MCF 10A (cell line): ENCODE measurements at regions of chr7 and their contacts with region 1.

Region 1: GRCh38 chr7:2109936-2110585 is 122.7 kb downstream of the MAD1L1 start:
- DNase-seq: peak; percentile 94
- H3K4me3 Mint-ChIP-seq: no peak overlapping the region
- H3K27ac Mint-ChIP-seq: peak overlapping the region; percentile 69
- H3K4me1 Mint-ChIP-seq: peaks cover 27% of the 10 kb centered on the region
- H3K27me3 Mint-ChIP-seq: no peaks in the 10 kb centered on the region
- CTCF ChIP-seq: no peak

Region 2: GRCh38 chr7:2175514-2175913 is 65.5 kb after region 1 on chr7:
- CTCF ChIA-PET with region 1: no interaction called
- POLR2A ChIA-PET with region 1: no interaction called
- intact Hi-C with region 1: loop called (anchors 1 kb)
- DNase-seq: peak; percentile 95
- H3K4me3 Mint-ChIP-seq: no peak overlapping the region
- H3K27ac Mint-ChIP-seq: peak overlapping the region; percentile 21
- H3K4me1 Mint-ChIP-seq: peaks cover 33% of the 10 kb centered on the region
- H3K27me3 Mint-ChIP-seq: no peaks in the 10 kb centered on the region
- CTCF ChIP-seq: no peak